GM12878 (cell line): ENCODE measurements at regions of chr7 and their contacts with region 1.

Region 1: GRCh38 chr7:101138213-101138870 is 11.4 kb downstream of the SERPINE1 start:
- DNase-seq: peak; percentile 79
- ATAC-seq: peak; percentile 97
- H3K4me3 ChIP-seq: 0 out of 2 replicates have a peak overlapping the region, but pooled peaks have one; percentile 39
- H3K27ac ChIP-seq: no peak overlapping the region
- H3K4me1 ChIP-seq: peaks cover 3% of the 10 kb centered on the region
- H3K27me3 ChIP-seq: peaks cover 0 to 2% of the 10 kb centered on the region in 2 experiments; a peak in 1 of 4 replicates
- CTCF ChIP-seq: peak; percentile 55 to 83 (median 57)
- EP300 ChIP-seq: peak in 1 of 2 experiments; percentile 76; a peak in 1 of 4 replicates
- POLR2A ChIP-seq: no peak
- RAD21 ChIP-seq: peak; percentile 44

Region 2: GRCh38 chr7:100911467-100911866 is 226.9 kb before region 1 on chr7:
- CTCF ChIA-PET with region 1: no interaction called
- POLR2A ChIA-PET with region 1: no interaction called
- RAD21 ChIA-PET with region 1: no interaction called
- SMC1A ChIA-PET with region 1: no interaction called
- in situ Hi-C with region 1: no loop called
- intact Hi-C with region 1: no loop called
- DNase-seq: no peak
- ATAC-seq: no peak
- H3K4me3 ChIP-seq: no peak overlapping the region
- H3K27ac ChIP-seq: no peak overlapping the region
- H3K4me1 ChIP-seq: no peaks in the 10 kb centered on the region
- H3K27me3 ChIP-seq: no peaks in the 10 kb centered on the region
- CTCF ChIP-seq: no peak
- EP300 ChIP-seq: no peak
- POLR2A ChIP-seq: no peak
- RAD21 ChIP-seq: no peak

Region 3: DNA sequence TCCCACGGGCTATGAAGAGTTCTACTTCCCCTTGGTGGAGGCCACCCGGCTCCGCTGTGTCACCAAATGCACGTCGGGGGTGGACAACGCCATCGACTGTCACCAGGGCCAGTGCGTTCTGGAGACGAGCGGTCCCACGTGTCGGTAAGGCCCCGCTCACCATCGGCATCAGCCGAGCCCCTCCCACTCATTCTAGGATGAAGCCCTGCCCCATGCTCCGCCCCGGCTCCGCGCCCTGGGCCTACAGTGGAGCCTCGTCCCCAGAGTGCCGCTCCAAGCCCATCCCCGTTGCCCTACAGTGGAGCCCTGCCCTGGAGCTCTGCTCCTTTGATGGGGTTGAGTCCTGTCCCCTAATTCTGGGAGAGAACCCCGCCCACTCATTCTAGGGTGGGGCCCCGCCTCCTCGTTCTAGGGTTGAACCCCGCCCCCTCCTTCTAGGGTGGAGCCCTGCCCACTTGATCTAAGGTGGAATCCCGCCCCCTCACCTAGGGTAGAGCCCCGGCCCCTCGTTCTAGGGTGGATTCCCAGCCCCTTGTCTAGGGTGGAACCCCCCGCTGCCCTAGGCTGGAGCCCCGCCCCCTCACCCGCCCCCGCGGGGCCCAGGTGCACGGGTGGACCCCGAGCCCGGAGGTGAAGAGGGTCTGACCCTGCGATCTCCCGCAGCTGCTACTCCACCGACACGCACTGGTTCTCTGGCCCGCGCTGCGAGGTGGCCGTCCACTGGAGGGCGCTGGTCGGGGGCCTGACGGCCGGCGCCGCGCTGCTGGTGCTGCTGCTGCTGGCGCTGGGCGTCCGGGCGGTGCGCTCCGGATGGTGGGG is 172.4 kb before region 1 on chr7:
- CTCF ChIA-PET with region 1: no interaction called
- POLR2A ChIA-PET with region 1: no interaction called
- RAD21 ChIA-PET with region 1: no interaction called
- SMC1A ChIA-PET with region 1: no interaction called
- in situ Hi-C with region 1: no loop called
- intact Hi-C with region 1: no loop called
- DNase-seq: no peak
- ATAC-seq: peak; percentile 93
- H3K4me3 ChIP-seq: peak overlapping the region; percentile 30; the same call in 1 of the 2 replicates
- H3K27ac ChIP-seq: no peak overlapping the region
- H3K4me1 ChIP-seq: no peaks in the 10 kb centered on the region
- H3K27me3 ChIP-seq: peaks cover 3 to 15% of the 10 kb centered on the region in 2 experiments; a peak in 3 of 4 replicates
- CTCF ChIP-seq: peak; percentile 64 to 81 (median 80)
- EP300 ChIP-seq: no peak
- POLR2A ChIP-seq: no peak
- RAD21 ChIP-seq: peak; percentile 63

Region 4: DNA sequence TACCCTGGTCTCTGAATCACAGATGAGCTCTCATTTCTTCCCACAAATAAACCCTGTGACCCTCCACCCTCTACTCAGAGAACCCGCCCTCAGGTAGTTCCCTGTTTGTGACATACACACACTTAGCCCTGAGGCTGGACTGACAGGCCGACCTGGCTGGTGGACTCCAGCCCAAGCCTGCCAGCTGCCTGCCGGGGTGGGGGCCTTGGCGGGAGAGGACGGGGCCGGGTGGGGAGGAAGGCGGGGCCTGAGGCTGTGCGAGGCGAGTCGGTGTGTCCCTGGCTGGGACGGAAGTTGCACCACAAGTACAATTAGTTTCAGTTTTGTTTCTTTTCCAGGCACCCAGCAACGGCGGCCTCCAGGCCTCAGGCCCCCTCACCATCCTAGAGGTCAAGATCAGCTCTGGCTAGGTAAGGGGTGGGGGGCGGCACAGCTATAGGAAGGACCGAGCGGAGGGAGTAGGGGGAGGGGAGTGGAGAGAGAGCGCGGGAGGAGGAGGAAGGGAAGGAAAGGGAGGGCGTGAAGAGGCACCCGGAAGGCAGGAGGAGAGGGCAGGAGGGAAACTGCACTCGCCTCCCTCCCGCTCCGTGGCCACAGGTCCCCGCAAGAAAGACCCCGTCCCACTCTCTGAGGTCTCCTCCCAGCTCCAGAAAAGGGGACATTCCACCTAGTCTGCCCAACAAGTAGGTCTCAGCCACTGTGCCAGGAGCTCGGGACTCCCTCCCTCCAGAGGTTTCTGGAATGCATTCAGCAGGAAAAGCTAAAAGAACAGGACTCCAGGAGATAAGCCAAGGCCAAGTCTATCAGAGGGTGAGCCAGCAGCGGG is 53.0 kb before region 1 on chr7 and contains the start of gene TRIM56:
- CTCF ChIA-PET with region 1: interaction called, 11 read pairs
- POLR2A ChIA-PET with region 1: no interaction called
- RAD21 ChIA-PET with region 1: interaction called, 15 read pairs
- SMC1A ChIA-PET with region 1: interaction called, 9 read pairs
- in situ Hi-C with region 1: no loop called
- intact Hi-C with region 1: loop called (anchors 5 kb)
- DNase-seq: peak; percentile 49
- ATAC-seq: peak; percentile 97
- H3K4me3 ChIP-seq: peak within 1 kb of the TSS; percentile 96
- H3K27ac ChIP-seq: peak within 1 kb of the TSS; percentile 100
- H3K4me1 ChIP-seq: peaks cover 14% of the 10 kb centered on the region
- H3K27me3 ChIP-seq: no peaks in the 10 kb centered on the region
- CTCF ChIP-seq: no peak
- EP300 ChIP-seq: no peak
- POLR2A ChIP-seq: peak; percentile 85
- RAD21 ChIP-seq: no peak
- polyA plus RNA-seq, gene TRIM56: 3.2 to 8.3 TPM

Region 5: DNA sequence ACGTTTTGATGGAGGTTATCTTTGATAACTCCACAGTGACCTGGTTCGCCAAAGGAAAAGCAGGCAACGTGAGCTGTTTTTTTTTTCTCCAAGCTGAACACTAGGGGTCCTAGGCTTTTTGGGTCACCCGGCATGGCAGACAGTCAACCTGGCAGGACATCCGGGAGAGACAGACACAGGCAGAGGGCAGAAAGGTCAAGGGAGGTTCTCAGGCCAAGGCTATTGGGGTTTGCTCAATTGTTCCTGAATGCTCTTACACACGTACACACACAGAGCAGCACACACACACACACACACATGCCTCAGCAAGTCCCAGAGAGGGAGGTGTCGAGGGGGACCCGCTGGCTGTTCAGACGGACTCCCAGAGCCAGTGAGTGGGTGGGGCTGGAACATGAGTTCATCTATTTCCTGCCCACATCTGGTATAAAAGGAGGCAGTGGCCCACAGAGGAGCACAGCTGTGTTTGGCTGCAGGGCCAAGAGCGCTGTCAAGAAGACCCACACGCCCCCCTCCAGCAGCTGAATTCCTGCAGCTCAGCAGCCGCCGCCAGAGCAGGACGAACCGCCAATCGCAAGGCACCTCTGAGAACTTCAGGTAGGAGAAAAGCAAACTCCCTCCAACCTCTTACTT is 11.6 kb before region 1 on chr7 and contains the start of gene SERPINE1:
- CTCF ChIA-PET with region 1: interaction called, 31 read pairs
- POLR2A ChIA-PET with region 1: interaction called, 12 read pairs
- RAD21 ChIA-PET with region 1: interaction called, 11 read pairs
- SMC1A ChIA-PET with region 1: interaction called, 13 read pairs
- in situ Hi-C with region 1: no loop called
- intact Hi-C with region 1: no loop called
- DNase-seq: peak; percentile 47
- ATAC-seq: peak; percentile 79
- H3K4me3 ChIP-seq: no peak within 1 kb of the TSS; the same call in 1 of the 2 replicates
- H3K27ac ChIP-seq: no peak within 1 kb of the TSS
- H3K4me1 ChIP-seq: peaks cover 26% of the 10 kb centered on the region
- H3K27me3 ChIP-seq: no peaks in the 10 kb centered on the region
- CTCF ChIP-seq: no peak
- EP300 ChIP-seq: no peak
- POLR2A ChIP-seq: peak; percentile 71
- RAD21 ChIP-seq: no peak
- polyA plus RNA-seq, gene SERPINE1: 0.20 to 0.39 TPM

Region 6: GRCh38 chr7:101173752-101174244 is 35.5 kb after region 1 on chr7:
- CTCF ChIA-PET with region 1: interaction called, 80 read pairs
- POLR2A ChIA-PET with region 1: no interaction called
- RAD21 ChIA-PET with region 1: interaction called, 20 read pairs
- SMC1A ChIA-PET with region 1: interaction called, 10 read pairs
- in situ Hi-C with region 1: no loop called
- intact Hi-C with region 1: no loop called
- DNase-seq: no peak
- ATAC-seq: peak; percentile 90
- H3K4me3 ChIP-seq: 0 out of 2 replicates have a peak overlapping the region, but pooled peaks have one; percentile 23
- H3K27ac ChIP-seq: no peak overlapping the region
- H3K4me1 ChIP-seq: peaks cover 7% of the 10 kb centered on the region; the same call in 1 of the 2 replicates
- H3K27me3 ChIP-seq: peaks cover 27 to 36% of the 10 kb centered on the region in 2 experiments
- CTCF ChIP-seq: no peak
- EP300 ChIP-seq: no peak
- POLR2A ChIP-seq: no peak
- RAD21 ChIP-seq: no peak

Region 7: GRCh38 chr7:101217388-101218235 is 79.3 kb after region 1 on chr7 and contains the starts of genes PLOD3 and ZNHIT1:
- CTCF ChIA-PET with region 1: interaction called, 26 read pairs
- POLR2A ChIA-PET with region 1: no interaction called
- RAD21 ChIA-PET with region 1: no interaction called
- SMC1A ChIA-PET with region 1: interaction called, 6 read pairs
- in situ Hi-C with region 1: no loop called
- intact Hi-C with region 1: no loop called
- DNase-seq: peak; percentile 96
- ATAC-seq: peak; percentile 92
- H3K4me3 ChIP-seq: peak within 1 kb of the TSS; percentile 88
- H3K27ac ChIP-seq: peak within 1 kb of the TSS; percentile 88
- H3K4me1 ChIP-seq: peaks cover 5% of the 10 kb centered on the region
- H3K27me3 ChIP-seq: no peaks in the 10 kb centered on the region
- CTCF ChIP-seq: peak in 1 of 3 experiments; percentile 5; a peak in 1 of 6 replicates
- EP300 ChIP-seq: no peak
- POLR2A ChIP-seq: peak; percentile 59
- RAD21 ChIP-seq: no peak
- polyA plus RNA-seq, gene PLOD3: 0.53 to 3.2 TPM
- polyA plus RNA-seq, gene ZNHIT1: 3.8 to 14.9 TPM

Region 8: DNA sequence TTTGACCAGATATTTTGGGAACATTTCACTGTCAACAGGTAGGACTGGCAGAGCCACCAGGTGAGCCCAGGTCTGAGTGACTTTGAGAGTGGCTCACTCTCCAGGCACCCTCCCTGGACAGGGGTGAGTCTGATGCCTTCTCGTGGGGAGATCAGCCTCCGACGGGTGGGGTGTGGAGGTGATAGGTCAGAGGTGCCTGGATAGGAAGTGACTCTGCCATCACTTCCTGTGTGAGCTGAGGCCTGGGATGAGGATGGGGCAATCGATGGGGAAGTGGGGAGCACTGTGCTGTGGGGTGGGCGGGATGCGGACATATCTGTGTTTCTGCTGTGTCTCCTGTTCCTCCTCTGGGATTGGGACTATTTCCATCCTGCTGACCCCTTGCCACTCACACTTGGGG is 148.7 kb after region 1 on chr7:
- CTCF ChIA-PET with region 1: interaction called, 161 read pairs
- POLR2A ChIA-PET with region 1: interaction called, 3 read pairs
- RAD21 ChIA-PET with region 1: interaction called, 97 read pairs
- SMC1A ChIA-PET with region 1: interaction called, 56 read pairs
- in situ Hi-C with region 1: no loop called
- intact Hi-C with region 1: no loop called
- DNase-seq: no peak
- ATAC-seq: no peak
- H3K4me3 ChIP-seq: no peak overlapping the region
- H3K27ac ChIP-seq: no peak overlapping the region
- H3K4me1 ChIP-seq: peaks cover 4% of the 10 kb centered on the region
- H3K27me3 ChIP-seq: no peaks in the 10 kb centered on the region; a peak in 2 of 4 replicates
- CTCF ChIP-seq: no peak
- EP300 ChIP-seq: no peak
- POLR2A ChIP-seq: no peak
- RAD21 ChIP-seq: no peak

Region 9: DNA sequence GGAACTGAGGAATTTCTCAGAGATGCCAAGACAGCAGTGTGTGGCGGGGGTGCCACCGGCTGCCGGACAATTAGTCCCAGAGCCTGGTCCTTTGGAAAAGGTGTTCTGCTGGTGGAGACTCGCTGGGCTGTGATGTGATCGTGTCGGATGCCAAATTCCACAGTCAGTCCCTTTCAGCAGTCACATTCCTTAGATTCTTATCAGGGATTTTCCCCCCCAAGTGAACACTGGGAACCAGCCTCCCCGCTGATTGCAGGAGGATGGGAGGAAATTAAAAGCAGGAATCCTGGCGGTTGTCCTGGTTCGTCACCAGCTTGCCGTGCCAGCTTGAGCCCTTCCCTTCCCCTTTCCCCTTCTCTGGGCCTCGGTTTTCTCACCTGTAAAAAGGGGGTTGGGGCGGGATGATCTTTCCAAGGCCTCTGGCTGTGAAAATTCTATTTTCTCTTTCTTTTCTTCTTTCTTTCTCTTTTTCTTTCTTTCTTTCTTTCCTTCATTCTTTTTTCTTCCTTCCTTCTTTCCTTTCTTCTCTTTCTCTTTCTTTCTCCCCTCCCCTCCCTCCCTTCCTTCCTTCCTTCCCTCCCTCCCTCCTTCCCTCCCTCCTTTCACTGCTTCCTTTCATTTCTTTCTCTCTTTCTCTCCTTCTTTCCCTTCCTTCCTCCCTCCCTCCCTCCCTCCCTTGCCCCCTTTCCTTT is 263.9 kb after region 1 on chr7:
- CTCF ChIA-PET with region 1: no interaction called
- POLR2A ChIA-PET with region 1: no interaction called
- RAD21 ChIA-PET with region 1: no interaction called
- SMC1A ChIA-PET with region 1: no interaction called
- in situ Hi-C with region 1: no loop called
- intact Hi-C with region 1: no loop called
- DNase-seq: no peak
- ATAC-seq: no peak
- H3K4me3 ChIP-seq: no peak overlapping the region
- H3K27ac ChIP-seq: no peak overlapping the region
- H3K4me1 ChIP-seq: no peaks in the 10 kb centered on the region
- H3K27me3 ChIP-seq: no peaks in the 10 kb centered on the region; a peak in 1 of 4 replicates
- CTCF ChIP-seq: no peak
- EP300 ChIP-seq: no peak
- POLR2A ChIP-seq: no peak
- RAD21 ChIP-seq: no peak